ENCODE measurements at regions of chr1 and their contacts with region 1.

Region 1: DNA sequence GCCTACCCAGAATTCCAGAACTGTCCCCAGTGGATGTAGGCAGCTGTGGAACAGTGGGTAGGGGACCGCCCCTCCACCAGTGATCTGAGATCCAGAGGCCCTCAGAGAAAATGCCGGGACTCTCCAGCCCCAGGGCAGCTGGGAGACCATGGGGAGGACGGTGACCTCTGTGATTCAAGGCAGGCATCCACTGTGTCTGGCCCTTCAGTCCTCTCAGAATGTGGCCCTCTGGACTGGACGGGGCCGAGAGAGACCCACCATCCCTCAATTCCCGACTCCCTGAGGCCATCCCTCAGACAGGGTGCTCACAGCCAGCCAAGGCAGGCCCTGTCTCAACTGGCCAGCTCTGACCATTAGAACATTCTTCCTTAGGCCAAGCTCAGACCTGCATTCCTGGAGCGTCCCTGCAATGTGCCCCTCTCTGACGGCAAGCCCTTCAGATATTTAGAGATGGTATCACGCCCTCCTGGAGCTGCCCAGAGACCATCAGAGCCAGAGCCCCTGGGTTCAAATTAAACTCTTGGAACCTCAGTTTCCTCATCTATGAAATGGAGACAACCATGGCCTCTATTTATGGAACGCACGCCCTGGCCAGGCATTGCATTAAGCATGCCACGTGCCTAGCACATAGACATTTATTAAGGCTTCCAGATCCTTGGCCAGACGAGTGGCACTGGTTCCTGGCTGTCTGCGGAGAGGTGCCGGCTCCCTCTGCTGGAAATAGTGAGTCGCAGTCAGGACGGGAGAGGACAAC is 9.6 kb upstream of the EPS8L3 start:
- DNase-seq: peak; percentile 92

Region 2: DNA sequence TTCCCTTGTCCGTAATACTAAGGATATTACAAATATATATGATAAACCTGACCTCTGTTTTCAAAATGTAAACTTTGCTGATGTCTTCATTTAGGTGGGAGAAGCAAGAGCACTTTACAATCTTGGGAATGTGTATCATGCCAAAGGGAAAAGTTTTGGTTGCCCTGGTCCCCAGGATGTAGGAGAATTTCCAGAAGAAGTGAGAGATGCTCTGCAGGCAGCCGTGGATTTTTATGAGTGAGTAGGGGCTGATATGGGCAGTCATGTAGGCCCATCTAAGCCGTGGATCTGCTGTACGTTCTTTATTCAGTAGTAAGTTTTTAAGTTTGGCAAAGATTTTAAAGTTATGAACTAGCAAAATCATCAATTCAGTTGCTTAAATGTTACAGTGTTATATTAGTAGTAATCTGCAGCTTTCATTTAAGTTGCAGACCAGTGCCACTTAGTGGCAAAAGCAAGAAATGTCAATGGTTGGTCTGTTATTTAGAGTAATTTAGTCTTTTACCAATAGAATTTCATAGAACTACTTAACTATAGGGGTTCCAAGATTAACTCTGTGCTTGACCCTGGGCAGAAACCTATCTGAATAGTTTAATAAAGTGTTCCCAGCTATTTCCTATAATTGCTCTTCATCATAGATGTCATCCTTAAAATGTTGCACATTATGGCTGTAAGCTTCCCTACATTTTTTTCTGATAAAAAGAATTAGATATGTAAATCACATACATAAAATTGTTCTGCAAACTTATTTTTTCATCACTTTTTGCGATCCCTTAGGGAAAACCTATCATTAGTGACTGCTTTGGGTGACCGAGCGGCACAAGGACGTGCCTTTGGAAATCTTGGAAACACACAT is 875.2 kb before region 1 on chr1:
- intact Hi-C with region 1: no loop called
- DNase-seq: no peak

Region 3: DNA sequence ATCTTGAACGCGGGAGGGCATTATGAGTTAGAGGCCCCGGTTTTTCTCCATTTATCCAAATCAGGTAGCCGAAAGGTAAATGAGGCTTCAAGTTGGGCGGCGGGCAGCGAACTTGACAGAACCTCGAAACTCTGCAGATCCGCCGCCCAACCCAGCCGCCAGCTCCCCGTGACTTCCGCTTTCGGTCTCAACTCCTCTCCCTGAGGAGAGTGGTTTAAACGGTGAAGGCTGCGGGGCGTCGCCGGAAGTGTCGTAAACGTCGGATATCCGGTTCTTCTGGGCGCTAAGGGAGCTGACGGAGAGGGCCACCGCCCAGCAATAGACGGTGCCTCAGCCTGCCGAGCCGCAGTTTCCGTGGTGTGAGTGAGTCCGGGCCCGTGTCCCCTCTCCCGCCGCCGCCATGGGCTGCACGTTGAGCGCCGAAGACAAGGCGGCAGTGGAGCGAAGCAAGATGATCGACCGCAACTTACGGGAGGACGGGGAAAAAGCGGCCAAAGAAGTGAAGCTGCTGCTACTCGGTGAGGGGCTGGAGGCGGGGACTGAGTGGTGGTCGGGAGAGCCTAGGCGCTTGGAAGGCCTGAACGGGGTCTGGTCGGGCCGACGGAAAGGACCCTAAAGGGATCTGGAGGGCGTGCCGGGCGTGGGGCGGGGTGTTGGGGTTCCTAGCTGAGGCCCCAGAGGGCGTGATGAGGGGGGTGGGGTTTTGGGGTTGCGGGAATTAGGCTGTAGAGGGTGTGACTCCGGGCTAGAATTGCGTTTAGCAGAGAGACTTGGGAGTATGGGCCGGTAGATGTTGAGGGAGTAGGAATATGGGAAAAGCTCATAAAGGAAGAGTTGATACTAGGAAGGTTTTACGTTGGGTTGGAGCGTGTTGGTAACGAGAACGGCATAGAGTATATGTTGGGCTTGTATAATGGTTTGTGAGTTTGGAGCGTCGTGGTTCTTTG is 224.7 kb before region 1 on chr1 and contains the start of gene GNAI3:
- intact Hi-C with region 1: loop called in 1 of 2 experiments (anchors 10 kb)
- DNase-seq: peak; percentile 99
- total RNA-seq, gene GNAI3: 6.8 to 7.5 TPM

Region 4: GRCh38 chr1:109636201-109636952 is 136.9 kb before region 1 on chr1:
- intact Hi-C with region 1: loop called (anchors 2 to 5 kb)
- DNase-seq: no peak

Region 5: GRCh38 chr1:109643385-109644230 is 129.7 kb before region 1 on chr1:
- intact Hi-C with region 1: loop called (anchors 2 to 5 kb)
- DNase-seq: peak; percentile 94

Region 6: DNA sequence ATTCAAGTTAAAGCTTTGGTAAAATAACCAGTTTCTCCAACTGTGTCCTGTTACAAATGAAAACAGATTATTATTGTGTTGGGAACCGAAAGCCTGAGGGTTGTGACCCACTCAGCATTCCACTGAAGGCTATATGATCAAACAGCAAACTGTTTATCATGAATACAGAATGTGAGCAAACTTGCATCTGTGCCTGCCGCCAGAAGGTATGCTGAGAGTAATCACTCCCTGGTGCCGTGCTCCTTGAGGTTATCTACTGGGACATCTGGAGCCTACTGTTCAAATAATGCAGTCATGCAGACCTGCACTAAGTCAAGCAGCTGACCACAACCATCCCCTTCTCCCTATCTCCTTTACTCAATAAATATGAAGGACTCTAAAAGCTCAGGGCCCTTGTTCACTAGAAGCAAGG is 47.9 kb before region 1 on chr1:
- intact Hi-C with region 1: no loop called
- DNase-seq: no peak

Region 7: DNA sequence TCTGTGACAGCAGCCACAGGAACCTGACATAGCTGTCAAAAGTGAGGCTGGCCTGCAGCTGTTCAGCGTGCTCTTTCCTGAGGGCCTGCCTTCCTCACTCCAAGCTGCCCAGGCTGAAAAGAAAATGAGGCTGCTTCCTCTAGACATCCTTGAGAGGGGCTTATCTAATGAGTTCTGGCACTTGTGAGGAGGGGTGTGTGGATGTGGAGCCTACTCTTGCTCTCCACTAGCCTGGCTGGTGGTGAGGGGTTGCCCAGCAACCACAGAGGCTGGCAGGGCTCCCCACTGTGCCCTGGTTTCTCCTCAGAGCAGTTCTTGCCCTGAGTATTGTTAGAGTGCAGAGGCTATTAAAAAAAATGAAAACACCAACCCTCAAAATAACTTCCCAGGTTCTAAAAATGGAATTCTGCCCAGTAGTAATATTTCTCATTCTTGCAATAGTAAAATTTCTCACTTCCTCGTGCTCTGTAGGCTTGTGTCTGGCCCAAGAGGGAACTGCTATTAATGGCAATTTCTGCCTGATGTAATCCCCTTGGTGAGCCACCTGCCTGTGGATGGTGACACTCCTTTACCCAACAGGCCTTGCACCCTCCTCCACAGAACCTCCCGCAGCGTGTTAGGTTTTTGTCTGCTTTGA is 43.0 kb after region 1 on chr1:
- intact Hi-C with region 1: no loop called
- DNase-seq: no peak

Region 8: DNA sequence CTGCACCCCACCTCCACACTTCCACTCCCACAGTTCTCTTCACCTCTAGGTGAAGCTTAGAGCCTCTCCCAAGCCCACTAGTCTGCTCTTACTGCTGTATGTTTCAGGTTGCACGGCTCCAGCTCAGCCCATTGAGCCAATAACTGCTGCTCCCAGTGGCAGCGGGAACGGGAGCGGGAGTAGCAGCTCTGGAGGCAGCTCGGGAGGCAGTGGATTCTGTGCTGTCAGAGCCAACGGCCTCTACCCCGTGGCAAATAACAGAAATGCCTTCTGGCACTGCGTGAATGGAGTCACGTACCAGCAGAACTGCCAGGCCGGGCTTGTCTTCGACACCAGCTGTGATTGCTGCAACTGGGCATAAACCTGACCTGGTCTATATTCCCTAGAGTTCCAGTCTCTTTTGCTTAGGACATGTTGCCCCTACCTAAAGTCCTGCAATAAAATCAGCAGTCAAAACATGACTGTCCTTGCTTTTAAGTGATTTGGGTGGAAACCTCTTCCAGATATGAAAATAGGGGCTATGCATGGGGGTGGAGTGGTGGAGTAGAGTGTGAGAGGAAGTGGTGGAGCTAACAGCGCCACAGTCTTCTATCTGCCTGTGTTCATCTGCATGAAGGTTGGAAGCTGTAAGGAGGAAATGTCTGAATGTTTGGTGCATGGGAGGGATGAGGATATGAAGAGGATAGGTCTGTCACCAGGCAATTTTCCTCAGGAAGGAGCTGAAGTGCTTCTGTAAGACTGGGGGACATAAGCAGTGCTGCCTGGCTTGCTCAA is 1547.0 kb after region 1 on chr1:
- intact Hi-C with region 1: no loop called
- DNase-seq: peak; percentile 68

Measured in posterior vena cava (tissue), 2 donors.